Activated T-helper 2 cell treated with anti-CD3 and anti-CD28 coated beads, Interferon-gamma antibody, Interleukin-2, Interleukin-4, amounts not matched to agents 10 μg/mL and 5 μg/mL and 100 μg/mL, durations not matched to agents 14 hours and 24 hours and 36 hours (primary cell): ENCODE measurements at regions of chr7 and their contacts with region 1.

Region 1: DNA sequence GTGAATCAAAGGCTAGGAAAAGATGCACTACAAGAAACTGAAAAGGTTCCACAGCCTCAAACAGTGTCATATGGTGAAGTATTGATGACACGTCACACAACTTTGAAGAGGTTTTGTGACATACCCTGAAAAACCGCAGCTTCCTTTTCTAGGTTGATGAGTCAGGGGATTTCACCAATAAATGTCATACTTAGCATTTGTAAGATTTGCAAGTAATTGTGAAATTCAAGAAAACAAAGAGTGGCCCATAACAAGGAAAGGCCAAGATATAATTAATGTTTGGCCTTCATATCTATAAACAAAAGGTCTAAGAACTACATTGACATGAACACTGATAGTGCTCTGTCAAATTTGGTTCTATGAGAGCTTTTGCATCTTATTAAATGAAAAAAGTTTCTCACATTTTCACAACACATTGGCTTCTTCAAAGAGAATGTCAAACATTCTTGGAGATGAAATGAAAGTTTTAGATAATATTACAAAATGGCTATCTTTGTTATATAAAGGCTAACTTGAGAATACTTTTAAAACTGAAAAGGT is 62.0 kb upstream of the NAMPT start:
- DNase-seq: peak; percentile 62
- H3K4me3 Mint-ChIP-seq: no peak overlapping the region
- H3K27ac Mint-ChIP-seq: peak overlapping the region; percentile 100
- H3K4me1 Mint-ChIP-seq: peaks cover 51% of the 10 kb centered on the region
- H3K27me3 Mint-ChIP-seq: no peaks in the 10 kb centered on the region

Region 2: DNA sequence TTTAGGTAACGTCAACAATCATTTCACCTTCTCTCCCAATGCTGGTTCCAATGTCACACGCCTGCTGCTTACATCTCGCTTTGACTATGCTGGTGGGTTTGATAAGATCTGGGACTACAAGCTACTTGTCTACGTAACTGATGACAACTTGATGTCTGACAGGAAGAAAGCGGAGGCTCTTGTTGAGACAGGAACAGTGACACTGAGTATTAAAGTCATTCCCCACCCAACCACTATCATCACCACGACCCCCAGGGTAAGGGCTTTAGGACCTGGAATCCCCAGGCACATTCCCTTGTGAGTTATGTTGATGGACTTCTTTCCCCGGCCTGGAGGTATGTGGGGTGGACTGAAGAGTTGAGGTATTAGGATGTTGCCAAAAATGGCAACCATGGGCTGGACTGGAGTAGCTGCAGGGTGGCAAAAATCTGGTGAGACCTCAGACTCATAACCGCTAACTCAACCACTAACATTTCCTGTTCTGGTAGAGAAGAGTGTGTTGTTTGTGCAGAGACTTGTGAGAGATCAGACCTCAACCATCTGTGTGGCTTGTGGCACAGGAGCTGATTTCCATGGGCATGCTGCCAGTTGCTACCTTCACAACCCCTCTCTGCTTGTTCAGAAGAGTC is 324.4 kb before region 1 on chr7:
- intact Hi-C with region 1: loop called (anchors 1 kb)
- DNase-seq: peak; percentile 68
- H3K4me3 Mint-ChIP-seq: peak overlapping the region; percentile 6
- H3K27ac Mint-ChIP-seq: peak overlapping the region; percentile 85
- H3K4me1 Mint-ChIP-seq: peaks cover 53% of the 10 kb centered on the region
- H3K27me3 Mint-ChIP-seq: peaks cover 7% of the 10 kb centered on the region

Region 3: DNA sequence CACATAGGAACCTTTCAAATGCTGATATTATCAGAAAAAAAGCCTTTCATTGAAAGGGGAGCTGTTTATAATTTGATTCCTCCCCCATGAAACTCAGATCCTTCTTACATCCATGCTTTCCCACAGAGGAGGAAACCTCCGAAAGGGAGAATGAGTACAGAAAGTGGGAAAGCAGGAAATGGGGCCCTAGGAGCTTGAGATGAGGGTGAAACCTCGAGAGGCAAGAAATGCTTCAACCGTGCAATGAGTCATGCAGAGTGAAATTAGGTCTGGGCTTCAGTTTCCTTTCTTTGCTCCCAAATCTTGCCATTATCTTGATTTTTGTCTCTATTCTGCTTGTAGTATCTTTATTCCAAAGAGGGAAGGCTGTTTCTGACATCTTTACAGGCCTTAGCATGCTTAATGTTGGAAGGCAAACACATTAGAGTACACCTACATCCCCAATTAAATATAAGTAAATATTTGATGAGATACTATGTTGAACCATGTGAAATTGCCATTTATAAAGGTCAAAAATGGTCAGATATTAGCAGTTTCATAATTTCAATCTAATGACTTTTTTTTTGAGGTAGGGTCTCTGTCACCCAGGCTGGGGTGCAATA is 141.0 kb before region 1 on chr7:
- intact Hi-C with region 1: no loop called
- DNase-seq: no peak
- H3K4me3 Mint-ChIP-seq: no peak overlapping the region
- H3K27ac Mint-ChIP-seq: no peak overlapping the region
- H3K4me1 Mint-ChIP-seq: peaks cover 7% of the 10 kb centered on the region
- H3K27me3 Mint-ChIP-seq: peaks cover 29% of the 10 kb centered on the region

Region 4: GRCh38 chr7:106367018-106367420 is 20.3 kb after region 1 on chr7:
- intact Hi-C with region 1: loop called (anchors 1 kb)
- DNase-seq: no peak
- H3K4me3 Mint-ChIP-seq: no peak overlapping the region
- H3K27ac Mint-ChIP-seq: peak overlapping the region; percentile 38
- H3K4me1 Mint-ChIP-seq: peaks cover 26% of the 10 kb centered on the region
- H3K27me3 Mint-ChIP-seq: peaks cover 18% of the 10 kb centered on the region

Region 5: GRCh38 chr7:106425017-106425719 is 78.4 kb after region 1 on chr7:
- intact Hi-C with region 1: loop called (anchors 1 kb)
- DNase-seq: peak; percentile 44
- H3K4me3 Mint-ChIP-seq: peak overlapping the region; percentile 65
- H3K27ac Mint-ChIP-seq: peak overlapping the region; percentile 98
- H3K4me1 Mint-ChIP-seq: peaks cover 75% of the 10 kb centered on the region
- H3K27me3 Mint-ChIP-seq: no peaks in the 10 kb centered on the region

Region 6: DNA sequence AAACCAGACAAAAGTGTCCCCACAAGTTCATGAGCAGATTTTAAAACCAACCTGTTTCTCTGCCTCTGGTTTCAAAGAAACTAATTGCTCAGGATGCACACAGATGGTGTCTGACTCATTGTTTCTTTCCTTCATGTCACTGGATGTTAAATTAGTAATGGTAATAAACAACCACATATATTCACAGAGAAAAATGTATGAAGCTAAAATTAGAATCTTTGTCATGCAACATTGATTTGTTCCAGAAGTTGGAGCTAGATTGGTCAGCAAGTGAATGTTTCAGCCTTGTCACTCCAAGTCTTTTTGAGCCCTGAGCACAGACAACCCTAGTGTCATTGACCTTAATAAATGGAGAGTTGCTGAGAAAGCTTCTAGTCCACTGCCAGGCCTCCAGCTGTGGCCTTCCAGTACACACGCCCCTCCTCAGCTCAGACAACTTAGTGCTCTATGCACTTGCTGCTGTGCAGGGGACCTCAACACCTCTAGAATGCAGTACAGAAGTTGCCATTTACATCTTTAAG is 138.3 kb after region 1 on chr7:
- intact Hi-C with region 1: loop called (anchors 1 kb)
- DNase-seq: no peak
- H3K4me3 Mint-ChIP-seq: no peak overlapping the region
- H3K27ac Mint-ChIP-seq: peak overlapping the region; percentile 69
- H3K4me1 Mint-ChIP-seq: peaks cover 53% of the 10 kb centered on the region
- H3K27me3 Mint-ChIP-seq: no peaks in the 10 kb centered on the region

Region 7: DNA sequence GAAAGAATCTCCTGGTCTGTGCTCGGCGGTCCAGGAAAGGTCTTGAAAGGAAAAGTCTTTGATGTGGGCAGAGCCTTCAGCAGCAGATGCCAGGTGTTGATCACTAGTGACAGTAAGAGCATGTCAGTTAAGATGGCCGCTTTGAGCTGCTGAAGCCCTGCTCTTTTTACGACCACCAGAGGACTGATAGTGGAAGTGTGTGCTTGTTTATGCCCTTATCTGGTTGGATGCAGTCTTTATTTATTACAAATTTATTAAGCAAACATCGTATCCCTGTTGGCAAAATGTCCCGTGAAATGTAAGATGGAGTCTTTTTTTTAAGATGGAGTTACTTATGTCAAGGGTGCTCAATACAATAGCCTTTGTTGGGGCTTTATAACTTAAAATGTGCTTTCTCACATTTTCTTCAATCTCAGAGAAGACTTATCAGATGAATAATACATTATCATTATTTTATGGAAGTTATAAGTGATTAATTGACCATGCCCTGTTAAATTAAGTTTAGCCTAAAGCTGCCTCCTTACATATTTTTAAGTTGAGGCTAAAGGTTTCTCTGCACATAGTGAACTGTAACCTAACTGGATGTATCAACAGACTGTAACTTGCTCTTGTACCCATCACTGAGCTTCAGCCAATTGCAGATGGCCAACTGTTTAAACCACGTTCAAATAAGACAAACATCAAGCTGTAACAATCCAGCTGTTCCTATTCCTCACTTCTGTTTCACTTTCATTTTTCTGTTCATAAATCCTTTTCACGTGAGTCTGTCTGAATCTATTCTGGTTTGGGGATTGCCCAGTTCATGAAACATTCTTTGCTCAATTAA is 421.0 kb after region 1 on chr7:
- intact Hi-C with region 1: loop called (anchors 5 kb)
- DNase-seq: no peak
- H3K4me3 Mint-ChIP-seq: peak overlapping the region; percentile 44
- H3K27ac Mint-ChIP-seq: peak overlapping the region; percentile 76
- H3K4me1 Mint-ChIP-seq: peaks cover 46% of the 10 kb centered on the region
- H3K27me3 Mint-ChIP-seq: no peaks in the 10 kb centered on the region